WTC11 (cell line): ENCODE measurements at regions of chr11 and their contacts with region 1.

Region 1: GRCh38 chr11:4636962-4637661 is at the start of gene OR51D1:
- DNase-seq: peak; percentile 87
- ATAC-seq: peak; percentile 97
- H3K4me3 Mint-ChIP-seq: no peak within 1 kb of the TSS
- H3K27ac Mint-ChIP-seq: no peak within 1 kb of the TSS
- H3K4me1 Mint-ChIP-seq: peaks cover 9% of the 10 kb centered on the region
- H3K27me3 Mint-ChIP-seq: no peaks in the 10 kb centered on the region
- CTCF ChIP-seq: peak; percentile 92
- total RNA-seq, gene OR51D1: not detected in 3 replicates

Region 2: DNA sequence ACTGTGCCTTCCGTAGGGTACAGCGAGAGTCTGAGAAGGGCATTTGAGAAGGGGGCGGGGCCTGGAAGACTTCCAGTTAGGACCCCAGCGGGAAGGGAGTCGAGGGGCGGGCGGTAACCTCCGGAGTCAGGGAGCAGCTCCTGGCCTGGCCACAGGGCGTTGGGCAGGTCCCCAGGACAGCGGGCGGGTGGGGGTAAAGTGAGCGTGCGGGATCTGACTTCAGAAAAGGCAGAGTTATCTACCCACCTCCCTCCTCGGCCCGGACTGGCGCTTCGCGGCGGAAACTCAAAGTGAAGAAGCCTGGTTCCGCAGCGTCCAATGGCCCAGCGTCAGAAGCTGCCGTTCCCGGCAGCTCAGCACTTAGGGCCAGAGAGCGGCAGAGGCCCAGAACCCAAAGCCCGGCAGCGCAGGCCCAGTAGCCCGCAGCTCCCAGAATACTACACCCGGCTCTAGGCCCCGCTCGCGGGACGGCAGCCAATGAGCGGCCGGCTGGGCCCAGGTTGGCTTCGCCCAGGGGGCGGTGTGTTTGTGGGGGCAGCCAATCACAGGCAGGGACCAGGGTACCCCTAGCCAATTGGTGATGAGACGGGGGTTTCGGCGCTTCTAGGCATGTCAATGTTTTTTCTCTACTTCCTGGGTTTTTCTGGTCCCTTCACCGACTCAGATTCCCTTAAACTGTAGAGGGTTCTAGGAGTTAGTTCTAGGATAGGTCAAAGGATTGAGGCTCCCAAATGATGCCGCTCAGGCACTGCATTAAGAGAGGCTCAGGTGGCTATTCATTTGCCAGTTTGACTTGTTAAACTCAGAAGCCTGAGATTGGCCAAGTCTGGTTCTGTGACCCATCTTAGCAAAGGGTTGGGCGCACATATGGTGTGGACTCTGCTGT is 29.1 kb before region 1 on chr11 and contains the start of gene TRIM68:
- CTCF ChIA-PET with region 1: interaction called, 12 read pairs
- POLR2A ChIA-PET with region 1: no interaction called
- DNase-seq: peak; percentile 95
- ATAC-seq: peak; percentile 98
- H3K4me3 Mint-ChIP-seq: peak within 1 kb of the TSS; percentile 77
- H3K27ac Mint-ChIP-seq: peak within 1 kb of the TSS; percentile 45
- H3K4me1 Mint-ChIP-seq: peaks cover 9% of the 10 kb centered on the region
- H3K27me3 Mint-ChIP-seq: peaks cover 19% of the 10 kb centered on the region
- CTCF ChIP-seq: no peak
- total RNA-seq, gene TRIM68: 8.2 to 10.7 TPM (median 8.7 TPM) in 3 replicates

Region 3: GRCh38 chr11:4626207-4627099 is 10.7 kb before region 1 on chr11:
- CTCF ChIA-PET with region 1: interaction called, 30 read pairs
- POLR2A ChIA-PET with region 1: no interaction called
- DNase-seq: peak; percentile 82
- ATAC-seq: peak; percentile 95
- H3K4me3 Mint-ChIP-seq: peak overlapping the region; percentile 12
- H3K27ac Mint-ChIP-seq: no peak overlapping the region
- H3K4me1 Mint-ChIP-seq: peaks cover 28% of the 10 kb centered on the region
- H3K27me3 Mint-ChIP-seq: peaks cover 2% of the 10 kb centered on the region; the same call in 1 of the 2 replicates
- CTCF ChIP-seq: peak; percentile 87

Region 4: DNA sequence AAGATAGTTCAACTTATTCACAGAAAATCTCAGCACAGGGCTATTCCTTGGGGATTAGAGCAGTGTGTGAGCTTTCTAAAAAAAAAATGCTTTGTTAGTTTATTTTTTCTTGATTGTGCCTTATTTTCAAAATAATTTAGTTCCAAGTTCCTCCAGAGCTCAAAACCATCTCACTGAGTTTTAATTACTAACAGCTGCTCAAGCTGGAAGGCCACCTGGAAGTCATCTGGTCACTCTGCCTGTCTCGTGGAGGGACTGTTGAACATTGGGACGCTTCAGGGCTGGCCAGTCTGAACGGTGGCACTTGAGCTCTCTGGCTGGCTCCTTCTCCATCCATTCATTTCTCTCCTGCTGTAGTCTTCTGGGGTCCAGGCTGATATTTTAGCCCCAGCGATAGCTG is 10.7 kb after region 1 on chr11:
- CTCF ChIA-PET with region 1: interaction called, 13 read pairs
- POLR2A ChIA-PET with region 1: no interaction called
- DNase-seq: no peak
- ATAC-seq: no peak
- H3K4me3 Mint-ChIP-seq: no peak overlapping the region
- H3K27ac Mint-ChIP-seq: no peak overlapping the region
- H3K4me1 Mint-ChIP-seq: peaks cover under 1% of the 10 kb centered on the region; the same call in 1 of the 2 replicates
- H3K27me3 Mint-ChIP-seq: peaks cover 3% of the 10 kb centered on the region; the same call in 1 of the 2 replicates
- CTCF ChIP-seq: no peak

Region 5: DNA sequence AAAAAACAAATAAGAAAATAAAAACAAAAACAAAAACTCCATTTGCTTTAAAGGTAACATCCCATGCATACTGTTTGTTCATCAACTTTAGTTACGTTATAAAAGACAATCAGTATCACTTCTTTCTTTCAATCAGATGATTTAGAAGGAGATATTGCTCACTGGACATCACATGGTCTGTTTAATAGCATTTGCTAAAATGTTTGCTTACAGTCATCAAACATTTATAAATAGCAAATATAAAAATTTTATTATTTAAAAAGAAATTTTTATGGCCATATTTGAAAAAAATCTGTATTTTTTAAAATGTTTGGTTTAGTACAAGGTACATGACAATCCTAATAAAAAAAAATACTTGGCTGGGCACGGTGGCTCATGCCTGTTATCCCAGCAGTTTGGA is 90.1 kb after region 1 on chr11:
- CTCF ChIA-PET with region 1: interaction called, 18 read pairs
- POLR2A ChIA-PET with region 1: no interaction called
- DNase-seq: no peak
- ATAC-seq: no peak
- H3K4me3 Mint-ChIP-seq: no peak overlapping the region
- H3K27ac Mint-ChIP-seq: no peak overlapping the region
- H3K4me1 Mint-ChIP-seq: peaks cover 6% of the 10 kb centered on the region
- H3K27me3 Mint-ChIP-seq: no peaks in the 10 kb centered on the region; the same call in 1 of the 2 replicates
- CTCF ChIP-seq: no peak

Region 6: DNA sequence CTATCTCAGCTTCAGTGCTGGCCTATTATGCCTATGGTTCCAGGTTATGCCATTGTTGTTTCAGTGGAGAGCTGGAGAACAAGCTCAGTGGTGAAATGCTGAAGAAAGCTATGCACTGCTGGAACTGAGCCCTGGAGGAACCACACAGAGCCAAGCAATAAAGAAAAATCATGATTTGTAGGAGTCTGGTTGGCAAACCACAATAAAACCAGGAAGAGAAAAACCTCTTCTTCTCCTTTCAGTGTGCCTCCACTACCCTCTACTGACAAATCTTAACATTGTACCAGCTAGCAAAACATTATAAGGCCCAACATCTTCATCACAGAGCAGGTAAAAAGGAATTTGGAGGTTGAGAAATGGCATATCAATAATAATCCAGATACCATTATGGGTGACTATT is 189.3 kb after region 1 on chr11:
- CTCF ChIA-PET with region 1: interaction called, 59 read pairs
- POLR2A ChIA-PET with region 1: no interaction called
- DNase-seq: no peak
- ATAC-seq: peak; percentile 61
- H3K4me3 Mint-ChIP-seq: no peak overlapping the region
- H3K27ac Mint-ChIP-seq: no peak overlapping the region
- H3K4me1 Mint-ChIP-seq: peaks cover 6% of the 10 kb centered on the region; the same call in 1 of the 2 replicates
- H3K27me3 Mint-ChIP-seq: no peaks in the 10 kb centered on the region; the same call in 1 of the 2 replicates
- CTCF ChIP-seq: 0 out of 2 replicates have a peak, but pooled peaks have one; percentile 17

Region 7: DNA sequence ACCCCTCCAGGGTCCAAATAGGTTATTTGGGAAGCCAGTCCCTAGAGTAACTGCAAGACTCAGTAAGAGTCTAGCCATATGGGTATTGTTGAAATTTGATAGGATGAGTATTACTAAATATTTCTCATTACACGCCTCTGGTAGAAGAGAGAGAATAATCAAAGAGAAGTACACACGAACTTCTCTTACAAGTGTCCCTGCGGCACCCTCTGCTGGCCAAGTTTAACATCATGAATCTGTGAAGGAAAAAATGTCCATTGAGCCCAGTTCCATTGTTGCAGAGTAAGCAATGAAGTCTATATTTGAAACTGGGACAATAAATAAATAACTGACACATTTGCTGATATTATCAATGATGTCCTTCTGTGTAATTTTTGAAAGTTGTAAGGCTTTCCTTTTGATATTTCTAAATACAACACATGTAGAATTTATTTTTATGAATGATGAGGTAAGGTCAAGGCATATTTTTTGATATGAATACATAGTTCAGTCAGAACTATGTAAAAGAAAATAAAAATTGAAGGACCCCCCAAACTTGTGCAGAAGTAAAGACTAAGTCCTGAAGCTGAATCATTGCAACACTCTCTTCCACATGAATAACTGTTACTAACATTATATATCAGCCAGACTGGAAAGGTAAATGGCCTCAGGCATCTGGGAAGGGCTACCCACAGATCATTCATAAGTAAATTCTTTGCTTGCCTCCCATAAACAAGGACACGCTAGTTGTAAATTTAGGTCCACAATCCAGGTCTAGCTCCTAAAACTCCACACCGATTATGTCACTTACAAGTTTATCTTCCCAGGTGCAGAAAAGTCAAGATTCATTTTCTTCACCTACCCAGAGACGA is 367.5 kb after region 1 on chr11:
- CTCF ChIA-PET with region 1: interaction called, 10 read pairs
- POLR2A ChIA-PET with region 1: no interaction called
- DNase-seq: peak; percentile 52
- ATAC-seq: peak; percentile 69
- H3K4me3 Mint-ChIP-seq: no peak overlapping the region
- H3K27ac Mint-ChIP-seq: no peak overlapping the region
- H3K4me1 Mint-ChIP-seq: peaks cover 5% of the 10 kb centered on the region; the same call in 1 of the 2 replicates
- H3K27me3 Mint-ChIP-seq: no peaks in the 10 kb centered on the region
- CTCF ChIP-seq: peak; percentile 52